ENCODE measurements at regions of chr6 and their contacts with region 1.

Region 1: DNA sequence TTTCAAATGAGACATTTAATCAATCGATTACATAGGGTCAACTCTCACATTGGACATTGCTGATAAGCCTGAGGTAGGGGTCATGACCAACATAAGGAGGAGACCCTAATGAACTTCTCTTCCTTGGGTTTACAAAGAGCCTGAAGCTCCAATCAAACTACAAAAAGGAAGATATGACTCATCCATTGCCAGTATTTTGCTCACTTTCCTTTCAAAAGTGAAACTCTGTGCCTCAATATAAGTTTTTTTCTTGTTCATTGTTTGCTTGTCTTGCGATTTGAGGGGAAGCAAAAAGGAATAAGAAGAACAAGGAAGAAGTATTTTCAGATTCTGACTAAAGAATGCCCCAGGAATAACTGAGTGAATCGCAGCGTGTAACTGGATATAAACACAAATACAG is 38.8 kb upstream of the KHDRBS2 start:
- DNase-seq: no peak
- H3K4me3 Mint-ChIP-seq: no peak overlapping the region
- H3K27ac Mint-ChIP-seq: no peak overlapping the region
- H3K4me1 Mint-ChIP-seq: no peaks in the 10 kb centered on the region
- H3K27me3 Mint-ChIP-seq: no peaks in the 10 kb centered on the region

Region 2: GRCh38 chr6:62367601-62368000 is 42.8 kb after region 1 on chr6:
- intact Hi-C with region 1: loop called (anchors 2 kb)
- DNase-seq: no peak
- H3K4me3 Mint-ChIP-seq: no peak overlapping the region
- H3K27ac Mint-ChIP-seq: no peak overlapping the region
- H3K4me1 Mint-ChIP-seq: no peaks in the 10 kb centered on the region
- H3K27me3 Mint-ChIP-seq: no peaks in the 10 kb centered on the region